ENCODE measurements at regions of chr5 and their contacts with region 1.

Region 1: GRCh38 chr5:169583424-169584204 is at the start of gene SPDL1:
- DNase-seq: peak; percentile 94
- CTCF ChIP-seq: no peak

Region 2: DNA sequence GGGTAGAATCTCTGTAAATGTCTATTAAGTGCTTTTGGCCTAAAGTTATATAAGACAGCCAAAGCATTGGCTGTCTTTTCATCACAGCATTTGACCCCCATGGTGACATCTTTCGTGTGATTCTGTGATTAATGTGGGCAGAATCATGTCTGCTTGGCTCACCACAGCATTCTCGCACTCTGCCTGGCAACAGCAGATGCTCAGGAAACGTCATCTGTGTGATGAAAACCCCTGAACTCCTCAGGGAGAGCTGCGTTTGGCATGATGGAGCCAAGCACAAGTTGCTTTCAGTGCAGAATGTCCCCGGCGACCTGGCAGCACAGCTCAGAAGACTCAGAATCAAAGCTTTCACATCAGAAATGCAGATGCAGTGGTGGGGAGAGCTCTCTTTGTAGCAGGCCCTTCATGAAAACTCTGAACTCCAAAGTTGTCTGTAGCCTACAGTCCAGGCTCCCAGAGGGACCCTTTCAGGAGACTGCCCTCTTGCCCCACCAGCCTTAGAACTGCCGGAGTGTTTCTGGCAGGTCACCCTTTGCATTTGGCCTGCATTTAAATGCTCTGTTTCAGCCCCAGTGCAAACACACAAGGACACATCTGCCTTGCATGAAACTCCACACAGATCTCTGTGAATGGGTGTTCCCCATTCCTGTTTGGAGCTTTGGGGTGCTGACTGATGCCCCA is 848.9 kb before region 1 on chr5:
- CTCF ChIA-PET with region 1: no interaction called
- POLR2A ChIA-PET with region 1: no interaction called
- DNase-seq: no peak
- CTCF ChIP-seq: no peak

Region 3: GRCh38 chr5:168987543-168988300 is 595.9 kb before region 1 on chr5:
- CTCF ChIA-PET with region 1: interaction called, 30 read pairs
- POLR2A ChIA-PET with region 1: no interaction called
- DNase-seq: peak; percentile 58
- CTCF ChIP-seq: peak; percentile 92

Region 4: DNA sequence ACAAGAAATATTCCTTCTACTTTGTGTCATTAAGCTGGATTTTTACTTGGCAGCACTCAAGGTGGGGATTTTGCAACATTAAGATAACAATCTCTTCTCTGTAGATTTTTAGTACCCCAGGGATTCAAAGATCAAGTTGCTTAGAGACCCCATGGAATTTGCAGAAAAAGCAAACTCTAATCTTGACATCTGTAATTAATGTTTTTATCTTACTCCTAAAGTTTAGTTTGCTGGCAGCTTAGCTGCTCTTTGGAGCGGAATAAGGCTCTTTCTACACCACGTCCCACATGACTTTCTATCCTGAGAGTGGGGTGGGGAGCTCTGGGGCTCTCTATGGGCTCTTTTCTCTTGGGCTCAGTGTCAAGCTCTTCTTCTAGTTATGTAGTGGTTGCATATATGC is 21.7 kb before region 1 on chr5:
- CTCF ChIA-PET with region 1: interaction called, 16 read pairs
- POLR2A ChIA-PET with region 1: no interaction called
- DNase-seq: no peak
- CTCF ChIP-seq: no peak

Region 5: DNA sequence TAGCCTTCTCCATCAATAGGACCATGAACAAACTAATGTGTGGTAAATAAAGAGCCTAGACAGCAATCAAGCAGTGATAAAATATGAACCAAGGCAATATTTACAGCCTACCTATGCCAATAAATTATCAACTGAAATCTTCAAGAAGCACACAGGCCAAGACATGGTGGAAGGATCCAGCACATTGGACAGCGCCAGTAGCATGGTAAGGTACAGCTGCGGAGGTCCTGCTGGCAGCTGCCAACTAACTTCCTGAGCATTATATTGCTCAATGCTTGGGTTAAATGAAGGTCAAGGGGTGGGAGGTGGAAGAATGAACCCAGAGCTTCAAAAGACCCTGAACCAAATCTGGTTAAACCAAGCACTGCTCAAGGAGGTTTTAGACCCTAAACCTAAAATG is 16.5 kb before region 1 on chr5:
- CTCF ChIA-PET with region 1: interaction called, 42 read pairs
- POLR2A ChIA-PET with region 1: no interaction called
- DNase-seq: no peak
- CTCF ChIP-seq: no peak

Region 6: GRCh38 chr5:169934990-169935389 is 351.4 kb after region 1 on chr5:
- CTCF ChIA-PET with region 1: no interaction called
- POLR2A ChIA-PET with region 1: no interaction called
- DNase-seq: no peak
- CTCF ChIP-seq: no peak

Region 7: GRCh38 chr5:170135796-170136579 is 552.4 kb after region 1 on chr5:
- CTCF ChIA-PET with region 1: no interaction called
- POLR2A ChIA-PET with region 1: no interaction called
- DNase-seq: no peak
- CTCF ChIP-seq: no peak

Measured in GM10248 (cell line).